Activated naive CD4-positive, alpha-beta T cell treated with anti-CD3 and anti-CD28 coated beads for 36 hours (primary cell): ENCODE measurements at regions of chr2 and their contacts with region 1.

Region 1: DNA sequence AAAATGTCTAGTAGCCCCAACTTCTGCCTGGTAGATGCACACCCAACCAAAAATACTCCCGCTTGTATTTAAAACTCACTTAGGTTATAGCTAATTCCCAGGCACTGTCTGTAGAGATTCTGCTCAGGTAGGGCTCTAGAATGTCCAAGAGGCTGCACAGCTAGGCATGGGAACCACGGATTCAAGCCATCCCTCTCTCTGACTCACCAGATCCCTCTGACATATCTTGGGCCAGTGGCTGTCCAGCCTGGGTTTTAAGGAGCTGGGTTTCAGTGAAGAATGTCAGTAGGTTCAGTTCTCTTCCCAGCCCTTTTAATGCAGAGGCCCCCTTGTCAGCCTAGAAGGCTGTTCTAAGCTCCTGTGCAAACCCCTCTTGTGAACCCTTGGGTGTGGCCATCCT is 15.9 kb upstream of the IL1R1 start:
- DNase-seq: no peak
- H3K4me3 Mint-ChIP-seq: no peak overlapping the region
- H3K27ac Mint-ChIP-seq: peak overlapping the region; percentile 81
- H3K4me1 Mint-ChIP-seq: peaks cover 31% of the 10 kb centered on the region
- H3K27me3 Mint-ChIP-seq: peaks cover 3% of the 10 kb centered on the region

Region 2: GRCh38 chr2:102063941-102064678 is 62.5 kb before region 1 on chr2:
- CTCF ChIA-PET with region 1: no interaction called
- intact Hi-C with region 1: loop called (anchors 1 kb)
- DNase-seq: peak; percentile 73
- H3K4me3 Mint-ChIP-seq: no peak overlapping the region
- H3K27ac Mint-ChIP-seq: peak overlapping the region; percentile 44
- H3K4me1 Mint-ChIP-seq: peaks cover 27% of the 10 kb centered on the region
- H3K27me3 Mint-ChIP-seq: no peaks in the 10 kb centered on the region

Region 3: GRCh38 chr2:102147935-102148334 is 21.3 kb after region 1 on chr2:
- CTCF ChIA-PET with region 1: no interaction called
- intact Hi-C with region 1: loop called (anchors 1 kb)
- DNase-seq: peak; percentile 77
- H3K4me3 Mint-ChIP-seq: no peak overlapping the region
- H3K27ac Mint-ChIP-seq: peak overlapping the region; percentile 77
- H3K4me1 Mint-ChIP-seq: peaks cover 27% of the 10 kb centered on the region
- H3K27me3 Mint-ChIP-seq: peaks cover 13% of the 10 kb centered on the region